ENCODE measurements at regions of chr11 and their contacts with region 1.

Region 1: GRCh38 chr11:10792398-10792975 is 16.2 kb downstream of the EIF4G2 start:
- DNase-seq: peak; percentile 89
- H3K4me3 Mint-ChIP-seq: no peak overlapping the region
- H3K27ac Mint-ChIP-seq: no peak overlapping the region
- H3K4me1 Mint-ChIP-seq: peaks cover 22% of the 10 kb centered on the region
- H3K27me3 Mint-ChIP-seq: peaks cover 3% of the 10 kb centered on the region

Region 2: DNA sequence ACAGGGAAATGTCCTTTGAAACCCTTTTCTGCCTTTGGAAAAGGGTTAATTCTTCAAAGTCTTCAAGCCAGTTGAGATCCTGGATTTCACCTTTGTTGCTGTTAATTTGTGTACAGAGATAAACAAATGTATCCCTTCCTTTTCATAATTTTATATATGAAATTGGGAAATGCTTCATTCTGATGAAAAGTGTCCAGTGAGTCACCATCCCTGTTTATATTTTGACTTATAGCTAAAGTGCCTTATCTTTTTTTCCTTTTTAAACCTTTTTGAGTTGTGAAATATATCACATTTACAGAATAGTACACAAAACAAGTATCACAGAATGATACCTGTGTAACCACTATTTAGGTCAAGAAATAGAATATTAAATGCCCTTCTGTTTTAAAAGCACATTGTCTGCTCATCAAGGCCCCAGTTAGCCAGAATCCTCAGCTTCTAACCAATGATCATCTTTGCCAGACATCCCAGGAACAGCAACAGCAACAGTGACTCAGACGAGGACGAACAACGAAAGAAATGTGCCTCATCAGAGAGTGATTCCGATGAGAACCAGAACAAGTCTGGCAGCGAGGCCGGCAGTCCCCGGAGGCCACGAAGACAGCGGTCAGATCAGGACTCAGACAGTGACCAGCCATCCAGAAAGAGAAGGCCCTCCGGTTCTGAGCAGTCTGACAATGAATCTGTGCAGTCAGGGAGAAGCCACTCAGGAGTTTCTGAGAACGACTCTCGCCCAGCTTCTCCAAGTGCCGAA is 14.1 kb before region 1 on chr11:
- CTCF ChIA-PET with region 1: interaction called, 25 read pairs
- POLR2A ChIA-PET with region 1: interaction called, 3 read pairs
- intact Hi-C with region 1: no loop called
- DNase-seq: no peak
- H3K4me3 Mint-ChIP-seq: no peak overlapping the region
- H3K27ac Mint-ChIP-seq: peak overlapping the region; percentile 60
- H3K4me1 Mint-ChIP-seq: peaks cover 12% of the 10 kb centered on the region
- H3K27me3 Mint-ChIP-seq: no peaks in the 10 kb centered on the region

Region 3: DNA sequence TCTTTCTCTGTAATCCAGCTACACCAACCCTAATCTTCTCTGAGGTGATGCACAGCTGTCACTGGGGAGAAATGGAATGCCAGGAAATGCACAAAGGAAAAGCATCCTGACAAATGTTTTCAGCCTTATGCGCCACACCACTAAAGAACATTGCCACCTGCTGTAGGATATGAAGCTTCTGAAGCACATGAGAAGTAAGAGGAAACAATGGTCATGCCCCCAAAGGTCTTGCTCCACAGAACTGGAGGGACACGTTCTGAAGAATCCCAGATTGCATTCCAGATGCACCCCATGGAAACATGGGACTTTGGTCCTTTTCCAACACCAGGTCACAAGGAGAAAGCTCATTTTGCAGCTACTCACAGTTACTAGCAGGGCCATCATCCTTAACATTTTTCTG is 114.0 kb after region 1 on chr11:
- CTCF ChIA-PET with region 1: interaction called, 13 read pairs
- POLR2A ChIA-PET with region 1: no interaction called
- intact Hi-C with region 1: no loop called
- DNase-seq: no peak
- H3K4me3 Mint-ChIP-seq: no peak overlapping the region
- H3K27ac Mint-ChIP-seq: no peak overlapping the region
- H3K4me1 Mint-ChIP-seq: no peaks in the 10 kb centered on the region
- H3K27me3 Mint-ChIP-seq: peaks cover 21% of the 10 kb centered on the region

Region 4: GRCh38 chr11:10925144-10925926 is 132.8 kb after region 1 on chr11:
- CTCF ChIA-PET with region 1: interaction called, 45 read pairs
- POLR2A ChIA-PET with region 1: no interaction called
- intact Hi-C with region 1: no loop called
- DNase-seq: no peak
- H3K4me3 Mint-ChIP-seq: no peak overlapping the region
- H3K27ac Mint-ChIP-seq: no peak overlapping the region
- H3K4me1 Mint-ChIP-seq: peaks cover 6% of the 10 kb centered on the region
- H3K27me3 Mint-ChIP-seq: peaks cover 10% of the 10 kb centered on the region

Region 5: DNA sequence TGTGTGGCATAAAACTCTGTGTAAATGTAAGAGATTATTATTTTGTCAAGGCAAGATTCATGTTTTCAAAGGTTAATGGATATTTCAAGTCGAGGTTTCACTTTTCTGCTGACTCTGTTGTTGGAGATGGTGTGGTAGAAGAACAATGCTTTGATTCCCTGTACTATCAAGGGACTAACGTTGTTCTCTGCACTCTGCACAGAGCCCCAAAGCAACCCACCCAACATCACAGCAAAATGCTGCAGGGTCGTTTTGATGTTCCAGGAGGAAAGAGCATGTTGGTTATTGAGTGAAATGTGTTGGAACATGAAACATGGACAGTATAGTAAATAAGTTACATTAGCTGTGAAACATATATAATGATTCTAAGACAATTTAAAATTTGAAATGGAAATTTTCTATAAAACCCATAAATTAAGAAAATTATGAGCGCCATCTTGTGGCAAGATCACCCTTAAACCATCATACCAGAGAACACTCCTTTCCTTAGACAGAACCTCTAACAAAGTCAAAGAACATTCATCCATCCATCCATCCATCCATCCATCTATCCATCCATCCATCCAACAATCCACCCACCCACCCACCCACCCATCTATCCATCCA is 229.7 kb after region 1 on chr11:
- CTCF ChIA-PET with region 1: interaction called, 83 read pairs
- POLR2A ChIA-PET with region 1: interaction called, 4 read pairs
- intact Hi-C with region 1: loop called (anchors 1 kb)
- DNase-seq: no peak
- H3K4me3 Mint-ChIP-seq: no peak overlapping the region
- H3K27ac Mint-ChIP-seq: no peak overlapping the region
- H3K4me1 Mint-ChIP-seq: no peaks in the 10 kb centered on the region
- H3K27me3 Mint-ChIP-seq: no peaks in the 10 kb centered on the region

Region 6: GRCh38 chr11:11157185-11157584 is 364.7 kb after region 1 on chr11:
- CTCF ChIA-PET with region 1: no interaction called
- POLR2A ChIA-PET with region 1: no interaction called
- intact Hi-C with region 1: loop called (anchors 10 kb)
- DNase-seq: peak; percentile 59
- H3K4me3 Mint-ChIP-seq: no peak overlapping the region
- H3K27ac Mint-ChIP-seq: no peak overlapping the region
- H3K4me1 Mint-ChIP-seq: peaks cover 14% of the 10 kb centered on the region
- H3K27me3 Mint-ChIP-seq: peaks cover 2% of the 10 kb centered on the region

Measured in activated CD4-positive, alpha-beta memory T cell treated with anti-CD3 and anti-CD28 coated beads for 36 hours (primary cell).